WTC11 (cell line): ENCODE measurements at regions of chr2 and their contacts with region 1.

Region 1: DNA sequence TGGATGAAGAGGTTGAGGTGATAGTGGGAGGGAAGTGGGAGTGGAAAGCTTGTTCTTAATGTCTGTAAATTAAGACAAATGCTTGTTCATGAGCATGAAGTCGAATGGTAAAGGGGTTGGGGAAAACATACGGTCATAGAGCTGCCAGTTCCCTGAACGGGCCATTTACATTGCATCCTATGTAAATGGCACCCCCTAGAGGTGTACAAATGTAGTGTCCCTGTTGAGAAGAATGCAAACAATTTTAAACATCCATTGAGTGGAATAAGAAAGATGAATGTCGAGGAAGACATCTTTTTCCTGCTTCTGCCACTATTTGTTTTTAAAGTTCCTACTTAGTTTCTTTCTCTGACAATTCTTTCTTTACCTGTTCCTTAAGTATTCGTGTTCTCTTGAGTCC is 155.7 kb downstream of the RDH14 start:
- DNase-seq: no peak
- ATAC-seq: peak; percentile 91
- H3K4me3 Mint-ChIP-seq: no peak overlapping the region
- H3K27ac Mint-ChIP-seq: no peak overlapping the region
- H3K4me1 Mint-ChIP-seq: peaks cover 16% of the 10 kb centered on the region
- H3K27me3 Mint-ChIP-seq: no peaks in the 10 kb centered on the region
- CTCF ChIP-seq: peak; percentile 58

Region 2: DNA sequence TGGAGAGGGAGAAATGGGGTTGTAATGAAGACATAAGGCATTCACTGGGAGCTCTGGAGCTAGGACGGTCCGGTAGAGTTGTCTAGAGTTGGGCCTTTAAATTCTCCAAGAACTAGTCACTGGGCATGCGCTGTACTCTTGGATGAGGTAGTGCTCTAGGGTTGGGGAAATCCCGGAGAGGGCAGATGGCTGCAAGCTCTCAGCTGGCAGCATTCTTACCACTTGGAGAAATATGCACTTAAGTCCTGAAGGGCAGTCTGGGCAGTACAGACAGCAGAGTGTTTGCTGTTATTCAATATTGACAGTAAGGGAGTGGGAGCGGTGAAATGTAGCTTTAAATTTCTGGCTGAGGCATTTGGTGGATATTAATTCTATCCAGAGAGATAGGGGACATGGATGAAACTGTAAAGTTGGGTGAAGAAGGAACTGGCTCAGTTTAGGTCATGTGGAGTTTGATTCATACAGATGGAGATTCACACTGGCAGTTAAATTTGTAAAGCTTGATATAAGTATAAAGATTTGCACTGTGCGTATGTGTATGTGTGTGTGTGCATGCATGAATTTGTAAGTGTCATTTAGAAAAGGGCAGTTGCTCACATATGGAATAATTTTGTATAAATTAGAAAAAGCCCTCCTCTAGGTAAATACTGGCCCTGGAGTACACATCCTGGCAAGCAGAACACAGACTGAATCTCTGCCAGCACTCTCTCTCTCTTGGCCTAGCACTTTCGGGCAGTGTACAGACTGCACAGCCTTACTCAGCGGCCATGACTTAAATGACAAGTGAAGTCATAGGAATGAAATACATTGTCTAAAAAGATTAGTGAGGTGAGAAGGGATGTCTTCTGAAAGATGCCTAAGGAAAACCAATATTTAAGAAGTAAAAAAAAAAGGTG is 58.6 kb before region 1 on chr2:
- CTCF ChIA-PET with region 1: no interaction called
- POLR2A ChIA-PET with region 1: no interaction called
- DNase-seq: no peak
- ATAC-seq: no peak
- H3K4me3 Mint-ChIP-seq: no peak overlapping the region
- H3K27ac Mint-ChIP-seq: no peak overlapping the region
- H3K4me1 Mint-ChIP-seq: no peaks in the 10 kb centered on the region
- H3K27me3 Mint-ChIP-seq: no peaks in the 10 kb centered on the region
- CTCF ChIP-seq: no peak

Region 3: GRCh38 chr2:18387441-18388206 is 17.1 kb before region 1 on chr2:
- CTCF ChIA-PET with region 1: interaction called, 14 read pairs
- POLR2A ChIA-PET with region 1: no interaction called
- DNase-seq: peak; percentile 87
- ATAC-seq: peak; percentile 93
- H3K4me3 Mint-ChIP-seq: no peak overlapping the region
- H3K27ac Mint-ChIP-seq: no peak overlapping the region
- H3K4me1 Mint-ChIP-seq: no peaks in the 10 kb centered on the region
- H3K27me3 Mint-ChIP-seq: no peaks in the 10 kb centered on the region
- CTCF ChIP-seq: peak; percentile 94